H1 (cell line): ENCODE measurements at regions of chrX and their contacts with region 1.

Region 1: DNA sequence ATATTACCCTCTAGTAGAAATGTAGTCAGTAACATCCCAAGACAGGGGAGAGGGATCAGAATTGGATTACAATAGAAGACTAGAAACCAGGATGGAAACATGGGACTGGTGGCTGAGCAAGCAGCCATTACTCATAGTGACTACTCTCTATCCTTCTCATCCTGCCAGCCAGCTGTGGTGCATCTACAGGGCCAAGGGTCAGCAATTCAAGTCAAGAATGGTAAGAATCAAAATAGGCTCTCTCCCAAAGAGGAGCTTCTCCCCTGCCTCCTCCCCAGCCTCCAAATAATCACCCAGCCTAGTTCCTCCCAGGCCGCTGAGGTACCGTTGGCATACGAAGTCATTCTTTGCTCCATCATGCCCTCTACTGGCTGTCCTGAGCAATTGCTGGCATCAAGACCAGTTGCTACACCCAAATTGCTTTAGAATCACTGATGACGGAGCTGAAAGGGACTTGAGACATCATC is 19.4 kb downstream of the AWAT2 start:
- DNase-seq: peak in 1 of 2 experiments; percentile 60
- H3K4me3 ChIP-seq: no peak overlapping the region
- H3K27ac ChIP-seq: no peak overlapping the region
- H3K4me1 ChIP-seq: peaks cover 0 to 2% (median 0%) of the 10 kb centered on the region in 4 experiments; a peak in 1 of 7 replicates
- H3K27me3 ChIP-seq: no peaks in the 10 kb centered on the region
- CTCF ChIP-seq: peak; percentile 63 to 85 (median 67)
- EP300 ChIP-seq: no peak
- POLR2A ChIP-seq: no peak
- RAD21 ChIP-seq: peak; percentile 79 to 85

Region 2: GRCh38 chrX:69493193-69493592 is 537.1 kb before region 1 on chrX:
- CTCF ChIA-PET with region 1: interaction called, 11 read pairs
- POLR2A ChIA-PET with region 1: no interaction called
- DNase-seq: peak in 1 of 2 experiments; percentile 72
- H3K4me3 ChIP-seq: no peak overlapping the region
- H3K27ac ChIP-seq: no peak overlapping the region
- H3K4me1 ChIP-seq: no peaks in the 10 kb centered on the region
- H3K27me3 ChIP-seq: no peaks in the 10 kb centered on the region
- CTCF ChIP-seq: peak in 2 of 3 experiments; percentile 51 to 54; a peak in 3 of 4 replicates
- EP300 ChIP-seq: no peak
- POLR2A ChIP-seq: no peak
- RAD21 ChIP-seq: peak; percentile 71 to 81

Region 3: GRCh38 chrX:69538321-69538876 is 491.9 kb before region 1 on chrX:
- CTCF ChIA-PET with region 1: interaction called, 29 read pairs
- POLR2A ChIA-PET with region 1: no interaction called
- DNase-seq: peak; percentile 27 to 85
- H3K4me3 ChIP-seq: peak overlapping the region; percentile 20 to 64 (median 41); a peak in 7 of 8 replicates
- H3K27ac ChIP-seq: no peak overlapping the region
- H3K4me1 ChIP-seq: peaks cover 0 to 2% (median 0%) of the 10 kb centered on the region in 4 experiments; a peak in 2 of 7 replicates
- H3K27me3 ChIP-seq: no peaks in the 10 kb centered on the region; a peak in 1 of 7 replicates
- CTCF ChIP-seq: peak; percentile 66 to 88 (median 79)
- EP300 ChIP-seq: no peak
- POLR2A ChIP-seq: no peak
- RAD21 ChIP-seq: peak; percentile 91 to 95

Region 4: GRCh38 chrX:70012756-70013155 is 17.6 kb before region 1 on chrX:
- CTCF ChIA-PET with region 1: interaction called, 12 read pairs
- POLR2A ChIA-PET with region 1: no interaction called
- DNase-seq: no peak
- H3K4me3 ChIP-seq: no peak overlapping the region
- H3K27ac ChIP-seq: no peak overlapping the region; the same call in 1 of the 2 replicates
- H3K4me1 ChIP-seq: peaks cover 0 to 5% (median 2%) of the 10 kb centered on the region in 4 experiments; a peak in 3 of 7 replicates
- H3K27me3 ChIP-seq: no peaks in the 10 kb centered on the region
- CTCF ChIP-seq: no peak
- EP300 ChIP-seq: no peak
- POLR2A ChIP-seq: no peak
- RAD21 ChIP-seq: no peak

Region 5: DNA sequence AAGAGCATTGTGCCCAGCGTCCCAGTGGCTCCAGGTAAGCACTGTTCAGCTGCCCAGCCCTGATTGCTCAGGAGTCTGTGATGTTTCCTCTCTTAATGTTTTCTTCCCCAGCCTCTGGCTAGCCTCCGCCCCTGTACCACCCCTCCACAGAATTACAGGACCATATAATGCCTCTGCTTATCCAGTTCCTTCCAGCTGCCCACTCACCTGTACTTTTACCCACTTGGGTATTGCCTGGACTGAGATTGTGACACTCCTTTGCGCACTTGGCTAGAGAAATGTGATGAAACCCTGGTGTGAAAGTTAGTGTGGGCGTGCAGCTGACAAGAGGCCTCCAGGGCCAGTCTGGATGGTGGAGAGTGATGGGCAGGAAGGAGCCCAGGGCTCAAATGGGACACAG is 19.6 kb after region 1 on chrX and contains the start of gene AWAT2:
- CTCF ChIA-PET with region 1: no interaction called
- POLR2A ChIA-PET with region 1: no interaction called
- DNase-seq: no peak
- H3K4me3 ChIP-seq: no peak within 1 kb of the TSS
- H3K27ac ChIP-seq: no peak within 1 kb of the TSS
- H3K4me1 ChIP-seq: no peaks in the 10 kb centered on the region
- H3K27me3 ChIP-seq: no peaks in the 10 kb centered on the region
- CTCF ChIP-seq: no peak
- EP300 ChIP-seq: no peak
- POLR2A ChIP-seq: no peak
- RAD21 ChIP-seq: no peak
- total RNA-seq, gene AWAT2: not detected in 2 replicates

Region 6: GRCh38 chrX:70066646-70067045 is 36.3 kb after region 1 on chrX:
- CTCF ChIA-PET with region 1: interaction called, 10 read pairs
- POLR2A ChIA-PET with region 1: no interaction called
- DNase-seq: no peak
- H3K4me3 ChIP-seq: no peak overlapping the region
- H3K27ac ChIP-seq: no peak overlapping the region
- H3K4me1 ChIP-seq: peaks cover 0 to 3% (median 0%) of the 10 kb centered on the region in 4 experiments; a peak in 1 of 7 replicates
- H3K27me3 ChIP-seq: no peaks in the 10 kb centered on the region; a peak in 1 of 7 replicates
- CTCF ChIP-seq: no peak
- EP300 ChIP-seq: no peak
- POLR2A ChIP-seq: no peak
- RAD21 ChIP-seq: no peak

Region 7: DNA sequence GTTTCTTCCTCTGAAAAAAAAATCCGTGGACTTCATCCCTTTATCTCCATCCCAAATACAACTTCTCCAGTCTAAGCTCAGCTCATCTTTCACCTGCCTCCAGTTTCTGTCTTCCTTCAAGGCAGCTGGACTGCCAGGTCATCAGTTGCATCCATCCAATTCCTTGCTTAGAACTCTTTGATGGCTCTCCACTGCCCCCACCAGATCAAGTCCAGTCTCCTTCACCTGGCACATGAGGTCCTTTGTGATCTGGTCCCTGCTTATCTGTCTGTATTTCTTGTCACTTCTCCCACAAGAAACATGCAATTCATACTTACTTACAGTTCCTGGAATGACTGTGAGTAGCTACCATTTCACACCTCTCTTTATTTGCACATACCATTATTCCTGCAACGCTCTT is 65.7 kb after region 1 on chrX:
- CTCF ChIA-PET with region 1: interaction called, 58 read pairs
- POLR2A ChIA-PET with region 1: interaction called, 3 read pairs
- DNase-seq: no peak
- H3K4me3 ChIP-seq: no peak overlapping the region
- H3K27ac ChIP-seq: no peak overlapping the region
- H3K4me1 ChIP-seq: no peaks in the 10 kb centered on the region
- H3K27me3 ChIP-seq: no peaks in the 10 kb centered on the region
- CTCF ChIP-seq: peak; percentile 19 to 45 (median 34); a peak in 3 of 4 replicates
- EP300 ChIP-seq: no peak
- POLR2A ChIP-seq: no peak
- RAD21 ChIP-seq: peak; percentile 57 to 69

Region 8: DNA sequence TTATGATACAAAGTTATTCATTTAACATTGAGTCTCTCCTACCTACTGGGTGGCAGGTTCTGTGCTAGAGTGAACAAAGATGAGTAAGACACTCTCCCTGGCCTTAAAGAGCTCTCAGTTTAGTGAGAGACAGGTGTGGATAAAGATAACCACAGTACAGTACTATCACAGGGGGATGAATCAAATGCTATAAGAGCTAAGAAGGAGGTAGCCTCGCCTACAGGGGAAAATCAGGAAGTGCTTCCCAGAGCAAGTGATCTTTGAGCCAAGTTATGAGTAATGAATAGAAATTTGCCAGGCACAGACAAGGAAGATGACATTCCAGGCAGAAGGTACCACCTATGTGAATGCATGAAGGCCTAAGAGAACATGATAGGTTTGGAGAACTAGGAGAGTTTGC is 99.5 kb after region 1 on chrX:
- CTCF ChIA-PET with region 1: interaction called, 10 read pairs
- POLR2A ChIA-PET with region 1: no interaction called
- DNase-seq: no peak
- H3K4me3 ChIP-seq: no peak overlapping the region
- H3K27ac ChIP-seq: no peak overlapping the region
- H3K4me1 ChIP-seq: peaks cover 0 to 16% (median 5%) of the 10 kb centered on the region in 4 experiments; a peak in 5 of 7 replicates
- H3K27me3 ChIP-seq: no peaks in the 10 kb centered on the region
- CTCF ChIP-seq: no peak
- EP300 ChIP-seq: no peak
- POLR2A ChIP-seq: no peak
- RAD21 ChIP-seq: no peak

Region 9: DNA sequence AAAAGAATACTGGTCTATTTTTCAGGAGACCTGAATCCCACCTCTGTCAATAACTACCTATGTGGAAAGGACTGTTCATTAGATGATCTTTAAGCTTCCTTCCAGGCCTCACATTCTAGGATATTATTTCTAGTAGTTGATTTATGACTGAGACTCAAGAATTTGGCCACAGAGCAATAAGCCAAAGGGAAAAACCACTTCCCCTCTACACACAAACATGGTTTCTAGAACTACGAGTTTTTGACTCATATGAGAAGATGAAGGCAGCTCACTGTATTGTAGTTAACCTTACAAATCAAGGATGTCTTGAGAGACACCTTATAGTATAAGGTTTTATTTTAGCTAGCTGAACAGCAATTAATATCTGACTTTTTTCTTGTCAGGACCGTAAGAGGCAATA is 355.9 kb after region 1 on chrX:
- CTCF ChIA-PET with region 1: no interaction called
- POLR2A ChIA-PET with region 1: no interaction called
- DNase-seq: no peak
- H3K4me3 ChIP-seq: no peak overlapping the region
- H3K27ac ChIP-seq: no peak overlapping the region
- H3K4me1 ChIP-seq: no peaks in the 10 kb centered on the region
- H3K27me3 ChIP-seq: no peaks in the 10 kb centered on the region
- CTCF ChIP-seq: no peak
- EP300 ChIP-seq: no peak
- POLR2A ChIP-seq: no peak
- RAD21 ChIP-seq: no peak